ENCODE measurements at regions of chr7 and their contacts with region 1.

Region 1: DNA sequence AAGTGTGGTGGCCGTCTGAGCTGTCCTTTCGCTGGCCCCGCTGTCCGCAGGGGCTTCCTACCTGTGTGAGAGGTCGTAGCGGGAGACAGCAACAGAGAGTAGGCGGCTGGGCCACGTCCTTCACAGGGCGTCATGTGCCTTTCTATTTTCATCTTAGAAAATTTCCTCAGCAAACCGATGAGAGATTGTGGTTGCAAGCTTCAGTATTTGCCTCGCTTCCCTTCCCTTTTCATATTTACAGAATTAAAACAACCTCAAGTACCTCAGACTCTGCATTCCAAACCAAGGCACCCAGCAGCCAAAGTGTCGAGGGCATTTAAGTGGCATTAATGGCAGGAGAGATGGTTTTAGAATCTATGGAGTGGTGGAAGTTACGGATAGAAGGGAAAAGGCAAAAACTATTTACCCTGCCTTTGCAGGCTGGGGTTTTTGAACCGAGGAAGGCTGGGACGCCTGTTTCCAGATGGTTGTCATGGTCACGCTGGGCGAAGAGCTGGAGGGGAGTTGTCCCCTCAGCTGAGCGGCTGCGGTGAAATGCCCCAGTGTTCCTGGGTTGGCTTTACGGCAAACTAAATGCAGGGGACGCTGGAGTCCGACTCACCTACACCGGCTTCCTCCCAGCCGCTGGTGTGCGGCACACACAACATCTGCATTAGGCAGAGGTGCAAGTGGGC is 41.9 kb downstream of the WIPI2 start:
- DNase-seq: peak; percentile 60
- ATAC-seq: peak; percentile 65
- H3K4me3 Mint-ChIP-seq: peak overlapping the region; percentile 81
- H3K27ac Mint-ChIP-seq: peak overlapping the region; percentile 99
- H3K4me1 Mint-ChIP-seq: peaks cover 75% of the 10 kb centered on the region
- H3K27me3 Mint-ChIP-seq: no peaks in the 10 kb centered on the region
- CTCF ChIP-seq: no peak

Region 2: GRCh38 chr7:5193880-5194279 is 38.1 kb before region 1 on chr7:
- CTCF ChIA-PET with region 1: no interaction called
- POLR2A ChIA-PET with region 1: interaction called, 16 read pairs
- intact Hi-C with region 1: loop called (anchors 1 kb)
- DNase-seq: no peak
- ATAC-seq: no peak
- H3K4me3 Mint-ChIP-seq: no peak overlapping the region
- H3K27ac Mint-ChIP-seq: no peak overlapping the region
- H3K4me1 Mint-ChIP-seq: peaks cover 22% of the 10 kb centered on the region
- H3K27me3 Mint-ChIP-seq: no peaks in the 10 kb centered on the region
- CTCF ChIP-seq: no peak

Region 3: GRCh38 chr7:5218564-5219360 is 13.2 kb before region 1 on chr7:
- CTCF ChIA-PET with region 1: interaction called, 5 read pairs
- POLR2A ChIA-PET with region 1: interaction called, 158 read pairs
- intact Hi-C with region 1: loop called (anchors 1 kb)
- DNase-seq: peak; percentile 52
- ATAC-seq: peak; percentile 89
- H3K4me3 Mint-ChIP-seq: peak overlapping the region; percentile 64
- H3K27ac Mint-ChIP-seq: peak overlapping the region; percentile 92
- H3K4me1 Mint-ChIP-seq: peaks cover 38% of the 10 kb centered on the region
- H3K27me3 Mint-ChIP-seq: no peaks in the 10 kb centered on the region
- CTCF ChIP-seq: no peak

Region 4: DNA sequence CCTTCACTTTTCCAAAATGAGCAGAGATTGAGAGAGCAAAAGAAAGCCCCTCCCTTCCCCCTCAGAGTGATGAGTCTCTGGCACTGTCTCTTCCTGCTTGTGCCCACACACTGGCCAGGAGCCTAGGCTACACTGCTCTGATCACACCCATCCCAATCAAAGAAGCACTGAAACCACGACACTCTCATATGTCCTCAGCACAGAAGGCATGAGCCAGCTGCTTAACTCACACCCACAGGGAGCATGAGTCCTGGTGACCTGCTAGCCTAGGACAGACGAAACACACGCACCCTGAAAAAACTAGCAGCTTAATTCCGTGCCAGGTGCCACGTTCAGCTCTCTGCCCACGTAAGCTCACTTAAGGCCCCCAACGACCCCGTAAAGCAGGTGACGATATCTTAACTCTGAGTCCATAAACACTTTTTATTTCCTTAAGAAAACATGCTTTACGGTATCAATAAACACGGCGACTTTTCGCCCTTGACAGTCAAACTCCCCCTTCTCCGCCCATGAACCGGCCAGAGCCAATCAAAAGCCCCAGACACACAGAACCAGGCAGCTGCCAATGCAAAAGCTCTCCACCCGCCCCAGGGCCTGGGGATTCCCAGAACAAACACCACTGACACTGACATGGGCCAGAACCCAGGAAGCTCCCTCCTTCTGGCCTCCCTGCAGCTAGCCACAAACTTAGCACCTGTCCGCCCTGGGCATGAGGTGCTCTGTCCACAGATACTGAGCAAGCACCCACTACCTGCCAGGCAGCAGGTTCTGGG is 122.7 kb after region 1 on chr7:
- CTCF ChIA-PET with region 1: no interaction called
- POLR2A ChIA-PET with region 1: no interaction called
- intact Hi-C with region 1: no loop called
- DNase-seq: no peak
- ATAC-seq: no peak
- H3K4me3 Mint-ChIP-seq: no peak overlapping the region
- H3K27ac Mint-ChIP-seq: no peak overlapping the region
- H3K4me1 Mint-ChIP-seq: peaks cover 3% of the 10 kb centered on the region
- H3K27me3 Mint-ChIP-seq: no peaks in the 10 kb centered on the region
- CTCF ChIP-seq: no peak

Region 5: DNA sequence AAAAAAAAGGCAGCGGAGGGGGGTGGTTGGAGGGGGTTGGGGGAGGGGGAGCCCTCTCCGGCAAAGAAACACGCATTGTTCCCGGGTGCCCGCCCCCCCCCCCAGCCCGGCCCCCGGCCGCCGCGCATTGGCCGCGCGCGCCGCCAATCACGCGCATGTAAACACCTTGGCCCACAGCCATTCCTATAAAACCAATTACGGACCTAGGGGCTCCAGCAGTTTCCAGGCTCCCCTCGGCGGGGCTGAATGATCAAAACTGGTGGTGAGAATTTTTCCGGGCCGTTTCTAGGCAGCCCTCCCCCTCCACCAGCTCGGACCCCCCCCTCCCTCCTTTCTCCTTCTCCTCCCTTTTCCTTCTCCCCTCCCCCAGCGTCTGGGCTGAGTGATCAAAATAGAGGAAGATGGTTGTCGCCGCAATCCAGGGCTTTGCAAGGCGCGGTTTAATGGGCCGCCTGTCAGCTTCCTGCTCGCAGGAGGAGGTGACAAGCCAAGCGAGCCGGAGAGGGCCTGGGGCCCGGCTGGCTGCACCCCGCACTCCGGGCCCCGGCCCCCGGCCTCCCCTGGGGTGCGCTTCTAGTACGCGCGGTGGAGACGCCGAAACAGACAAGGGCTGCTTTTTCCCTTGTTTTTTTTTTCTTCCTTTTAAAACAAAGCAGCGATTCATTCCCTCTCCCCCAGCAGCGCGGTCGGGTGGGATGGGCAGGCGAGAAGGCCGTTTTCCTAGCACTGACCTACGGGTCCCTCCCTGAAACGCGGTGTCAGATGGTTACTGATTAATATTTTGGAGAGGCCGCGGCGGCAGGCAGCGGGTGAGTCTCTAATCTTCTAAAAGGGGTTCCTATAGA is 192.1 kb after region 1 on chr7:
- CTCF ChIA-PET with region 1: no interaction called
- POLR2A ChIA-PET with region 1: interaction called, 3 read pairs
- intact Hi-C with region 1: loop called (anchors 5 kb)
- DNase-seq: peak; percentile 40
- ATAC-seq: peak; percentile 58
- H3K4me3 Mint-ChIP-seq: peak overlapping the region; percentile 83
- H3K27ac Mint-ChIP-seq: peak overlapping the region; percentile 65
- H3K4me1 Mint-ChIP-seq: peaks cover 61% of the 10 kb centered on the region
- H3K27me3 Mint-ChIP-seq: peaks cover 25% of the 10 kb centered on the region
- CTCF ChIP-seq: no peak

Region 6: GRCh38 chr7:5532520-5533335 is 300.8 kb after region 1 on chr7:
- CTCF ChIA-PET with region 1: no interaction called
- POLR2A ChIA-PET with region 1: interaction called, 10 read pairs
- intact Hi-C with region 1: no loop called
- DNase-seq: peak; percentile 78
- ATAC-seq: peak; percentile 41
- H3K4me3 Mint-ChIP-seq: peak overlapping the region; percentile 95
- H3K27ac Mint-ChIP-seq: peak overlapping the region; percentile 97
- H3K4me1 Mint-ChIP-seq: peaks cover 43% of the 10 kb centered on the region
- H3K27me3 Mint-ChIP-seq: no peaks in the 10 kb centered on the region
- CTCF ChIP-seq: no peak

Measured in activated B cell treated with CpG ODN at 0.5 μM for 24 hours (primary cell).